ENCODE measurements at regions of chr16 and their contacts with region 1.

Region 1: GRCh38 chr16:89222931-89223330 is 5.4 kb downstream of the ZNF778 start:
- DNase-seq: no peak
- H3K4me3 ChIP-seq: no peak overlapping the region
- H3K27ac ChIP-seq: no peak overlapping the region
- H3K4me1 ChIP-seq: peaks cover 0 to 14% (median 9%) of the 10 kb centered on the region in 4 donors
- H3K27me3 ChIP-seq: no peaks in the 10 kb centered on the region
- CTCF ChIP-seq: no peak

Region 2: DNA sequence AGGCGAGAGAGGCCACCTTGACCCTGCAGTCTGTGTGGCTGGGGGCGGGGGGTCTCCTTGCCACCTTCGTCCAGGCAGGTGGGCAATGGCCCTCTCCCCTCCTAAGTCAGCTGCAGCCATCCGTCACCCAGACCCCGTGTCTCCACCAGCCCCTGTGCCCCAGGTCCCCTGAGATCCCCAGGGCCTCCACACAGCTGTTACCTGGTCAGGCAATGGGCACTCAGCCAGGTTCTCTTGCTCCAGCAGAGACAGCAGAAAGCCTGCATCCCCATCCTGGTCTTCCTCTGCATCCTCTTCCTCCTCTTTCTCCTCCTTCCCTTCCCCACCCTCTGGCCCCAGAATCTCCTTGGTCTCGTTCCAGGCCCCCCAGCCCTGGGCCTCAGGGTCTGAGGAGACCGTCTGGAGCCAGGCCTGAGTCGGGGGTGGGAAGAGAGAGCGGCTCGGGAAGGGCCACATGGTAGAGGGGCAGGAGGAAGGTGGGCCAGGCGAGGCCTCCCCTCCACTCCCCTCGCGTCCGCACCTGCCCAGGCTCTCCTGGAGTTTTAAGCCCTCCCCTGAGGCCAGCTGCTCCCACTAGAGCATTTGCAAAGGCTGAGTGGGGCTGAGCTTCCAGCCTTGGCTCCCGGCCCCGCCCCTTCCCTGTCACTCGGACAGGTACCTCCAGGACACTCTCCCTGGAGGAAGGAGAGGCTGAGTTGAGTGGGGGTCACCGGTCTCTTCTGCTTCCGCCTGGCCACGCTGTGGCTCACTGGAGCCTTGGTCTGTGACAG is 356.6 kb before region 1 on chr16 and contains the start of gene PABPN1L:
- intact Hi-C with region 1: loop called (anchors 10 kb)
- DNase-seq: no peak
- H3K4me3 ChIP-seq: no peak within 1 kb of the TSS
- H3K27ac ChIP-seq: no peak within 1 kb of the TSS
- H3K4me1 ChIP-seq: no peaks in the 10 kb centered on the region
- H3K27me3 ChIP-seq: peaks cover 0 to 53% of the 10 kb centered on the region in 2 donors
- CTCF ChIP-seq: no peak

Measured in tibial artery (tissue), 4 donors.